ENCODE measurements at regions of chr3 and their contacts with region 1.

Region 1: GRCh38 chr3:141255846-141256261 is 24.2 kb downstream of the PXYLP1 start:
- DNase-seq: peak; percentile 55 to 62 (median 56)
- H3K4me3 ChIP-seq: no peak overlapping the region
- H3K4me3 Mint-ChIP-seq: peak overlapping the region in 4 of 8 donors; percentile 5 to 58 (median 12)
- H3K27ac ChIP-seq: no peak overlapping the region
- H3K27ac Mint-ChIP-seq: peak overlapping the region in 6 of 7 donors; percentile 2 to 77 (median 32)
- H3K4me1 ChIP-seq: no peaks in the 10 kb centered on the region
- H3K4me1 Mint-ChIP-seq: peaks cover 11 to 15% (median 12%) of the 10 kb centered on the region in 4 donors
- H3K27me3 ChIP-seq: no peaks in the 10 kb centered on the region
- H3K27me3 Mint-ChIP-seq: no peaks in the 10 kb centered on the region

Region 2: DNA sequence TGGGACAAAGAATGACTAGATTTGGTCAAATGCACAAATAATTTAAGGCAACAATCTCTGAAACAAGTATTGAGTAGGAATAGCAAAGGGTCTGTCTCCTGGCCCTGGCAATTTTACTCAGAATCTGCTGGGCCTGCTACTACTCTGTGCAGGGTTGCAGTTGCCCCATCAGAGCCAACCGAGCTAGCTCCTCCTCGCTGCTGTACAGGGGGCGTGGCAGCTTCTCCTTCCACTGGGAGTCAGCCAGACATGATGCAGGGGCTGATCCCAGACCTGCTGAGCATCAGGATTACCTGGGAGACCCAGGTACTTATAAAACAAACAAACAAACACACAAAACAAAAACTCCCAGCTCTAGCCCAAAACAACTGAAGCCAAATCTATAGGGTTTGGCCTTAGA is 54.7 kb before region 1 on chr3:
- CTCF ChIA-PET with region 1: no interaction called
- POLR2A ChIA-PET with region 1: no interaction called
- intact Hi-C with region 1: no loop called
- DNase-seq: no peak
- H3K4me3 ChIP-seq: no peak overlapping the region
- H3K4me3 Mint-ChIP-seq: no peak overlapping the region
- H3K27ac ChIP-seq: no peak overlapping the region
- H3K27ac Mint-ChIP-seq: no peak overlapping the region
- H3K4me1 ChIP-seq: no peaks in the 10 kb centered on the region
- H3K4me1 Mint-ChIP-seq: no peaks in the 10 kb centered on the region
- H3K27me3 ChIP-seq: no peaks in the 10 kb centered on the region
- H3K27me3 Mint-ChIP-seq: peaks cover 2 to 10% of the 10 kb centered on the region in 2 donors

Region 3: GRCh38 chr3:141237701-141238521 is 17.9 kb before region 1 on chr3:
- CTCF ChIA-PET with region 1: interaction called, 180 read pairs
- POLR2A ChIA-PET with region 1: interaction called, 34 read pairs
- intact Hi-C with region 1: no loop called
- DNase-seq: peak in 2 of 5 donors; percentile 5 to 6
- H3K4me3 ChIP-seq: no peak overlapping the region
- H3K4me3 Mint-ChIP-seq: peak overlapping the region in 7 of 8 donors; percentile 17 to 74 (median 48)
- H3K27ac ChIP-seq: no peak overlapping the region
- H3K27ac Mint-ChIP-seq: peak overlapping the region; percentile 8 to 90 (median 64)
- H3K4me1 ChIP-seq: peaks cover 36% of the 10 kb centered on the region
- H3K4me1 Mint-ChIP-seq: peaks cover 29 to 61% (median 50%) of the 10 kb centered on the region in 4 donors
- H3K27me3 ChIP-seq: no peaks in the 10 kb centered on the region
- H3K27me3 Mint-ChIP-seq: no peaks in the 10 kb centered on the region

Region 4: GRCh38 chr3:141243271-141243707 is 12.6 kb before region 1 on chr3:
- CTCF ChIA-PET with region 1: interaction called, 18 read pairs
- POLR2A ChIA-PET with region 1: no interaction called
- intact Hi-C with region 1: no loop called
- DNase-seq: peak; percentile 26 to 68 (median 32)
- H3K4me3 ChIP-seq: no peak overlapping the region
- H3K4me3 Mint-ChIP-seq: peak overlapping the region in 7 of 8 donors; percentile 36 to 72 (median 59)
- H3K27ac ChIP-seq: no peak overlapping the region
- H3K27ac Mint-ChIP-seq: peak overlapping the region in 6 of 7 donors; percentile 38 to 86 (median 59)
- H3K4me1 ChIP-seq: peaks cover 17% of the 10 kb centered on the region
- H3K4me1 Mint-ChIP-seq: peaks cover 17 to 23% (median 21%) of the 10 kb centered on the region in 4 donors
- H3K27me3 ChIP-seq: no peaks in the 10 kb centered on the region
- H3K27me3 Mint-ChIP-seq: no peaks in the 10 kb centered on the region

Region 5: DNA sequence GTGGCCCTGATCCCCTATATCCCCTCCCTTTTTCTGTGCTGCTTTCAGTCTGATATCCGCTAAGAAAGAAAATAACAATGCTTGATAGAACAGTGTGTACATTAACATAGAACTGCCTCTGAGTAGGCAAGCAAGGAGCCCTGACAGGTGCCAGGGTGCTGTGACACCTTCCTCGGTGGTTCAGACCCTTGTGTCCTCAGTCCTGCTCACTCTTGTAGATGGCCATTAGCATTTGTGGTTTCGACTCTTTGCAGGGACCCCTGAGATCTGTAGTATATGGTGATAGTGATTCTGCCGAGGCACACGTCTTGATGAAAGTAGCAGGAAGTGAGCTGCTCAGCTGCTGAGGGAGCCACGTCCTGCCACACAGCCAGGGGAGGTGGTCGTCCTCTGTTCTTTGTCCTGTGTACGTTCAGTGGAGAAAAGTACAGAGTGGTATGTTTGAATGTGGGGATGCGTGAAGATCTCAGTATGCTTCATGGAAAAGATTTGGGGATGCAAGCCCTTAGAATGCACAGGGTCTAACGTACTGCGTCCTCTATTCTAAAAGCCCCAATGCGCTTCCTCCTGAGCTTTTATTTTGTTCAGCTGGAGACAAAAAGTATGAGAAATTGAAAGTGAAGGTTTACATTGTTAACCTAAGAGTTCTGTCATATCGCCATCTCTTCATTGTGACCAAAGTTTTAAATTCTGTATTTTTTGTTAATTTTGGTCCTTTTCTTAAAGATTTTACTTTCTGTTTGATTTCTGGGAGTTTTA is 11.1 kb after region 1 on chr3:
- CTCF ChIA-PET with region 1: interaction called, 23 read pairs
- POLR2A ChIA-PET with region 1: interaction called, 19 read pairs
- intact Hi-C with region 1: no loop called
- DNase-seq: peak; percentile 51 to 68 (median 58)
- H3K4me3 ChIP-seq: peak overlapping the region; percentile 54 to 66
- H3K4me3 Mint-ChIP-seq: peak overlapping the region; percentile 88 to 99 (median 92)
- H3K27ac ChIP-seq: peak overlapping the region; percentile 73
- H3K27ac Mint-ChIP-seq: peak overlapping the region; percentile 85 to 98 (median 96)
- H3K4me1 ChIP-seq: peaks cover 27% of the 10 kb centered on the region
- H3K4me1 Mint-ChIP-seq: peaks cover 17 to 57% (median 29%) of the 10 kb centered on the region in 4 donors
- H3K27me3 ChIP-seq: no peaks in the 10 kb centered on the region
- H3K27me3 Mint-ChIP-seq: no peaks in the 10 kb centered on the region

Region 6: DNA sequence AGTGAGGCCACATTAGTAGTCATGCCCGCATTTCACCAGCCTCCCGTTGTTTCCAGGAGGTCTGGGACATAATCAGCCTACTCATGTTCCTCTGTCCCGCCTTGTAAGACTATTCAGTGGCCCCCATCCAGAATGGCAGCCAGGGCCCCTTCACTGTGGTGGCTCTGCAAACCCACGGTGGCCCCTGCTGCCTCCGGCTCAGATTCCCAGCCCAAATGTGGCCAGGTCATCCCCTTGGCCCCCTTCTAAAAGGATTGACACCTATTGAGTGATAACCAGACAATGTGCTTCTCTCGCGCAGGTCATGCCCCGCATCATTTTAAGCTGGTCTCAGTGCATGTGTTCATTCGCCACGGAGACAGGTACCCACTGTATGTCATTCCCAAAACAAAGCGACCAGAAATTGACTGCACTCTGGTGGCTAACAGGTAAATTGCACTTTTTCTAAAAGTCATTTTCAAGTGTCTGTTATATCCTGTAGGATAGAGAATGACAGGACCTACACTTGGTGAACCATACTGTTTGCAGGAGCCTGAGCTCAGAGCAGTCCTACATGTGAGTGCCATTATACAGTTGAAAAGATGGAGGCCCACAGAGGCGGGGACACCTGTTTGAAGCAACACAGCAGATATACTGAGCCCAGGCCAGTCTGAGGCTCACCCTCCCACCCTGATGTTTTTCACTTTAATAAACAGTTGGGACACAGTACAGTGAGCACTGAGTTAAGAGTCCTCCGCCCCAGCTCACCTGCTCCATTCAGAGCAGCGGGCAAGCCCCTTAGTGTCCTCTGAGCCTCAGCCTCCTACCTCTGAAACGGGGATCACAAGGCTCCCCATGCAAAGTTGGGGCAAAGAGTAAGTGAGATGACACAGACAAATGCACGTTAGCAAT is 23.5 kb after region 1 on chr3:
- CTCF ChIA-PET with region 1: interaction called, 14 read pairs
- POLR2A ChIA-PET with region 1: no interaction called
- intact Hi-C with region 1: no loop called
- DNase-seq: peak in 4 of 5 donors; percentile 24 to 39 (median 26)
- H3K4me3 ChIP-seq: no peak overlapping the region
- H3K4me3 Mint-ChIP-seq: peak overlapping the region in 2 of 8 donors; percentile 2 to 14
- H3K27ac ChIP-seq: no peak overlapping the region
- H3K27ac Mint-ChIP-seq: peak overlapping the region in 2 of 7 donors; percentile 36 to 48
- H3K4me1 ChIP-seq: peaks cover 18% of the 10 kb centered on the region
- H3K4me1 Mint-ChIP-seq: peaks cover 16 to 25% (median 19%) of the 10 kb centered on the region in 4 donors
- H3K27me3 ChIP-seq: no peaks in the 10 kb centered on the region
- H3K27me3 Mint-ChIP-seq: no peaks in the 10 kb centered on the region